A673 (cell line): ENCODE measurements at regions of chr5 and their contacts with region 1.

Region 1: DNA sequence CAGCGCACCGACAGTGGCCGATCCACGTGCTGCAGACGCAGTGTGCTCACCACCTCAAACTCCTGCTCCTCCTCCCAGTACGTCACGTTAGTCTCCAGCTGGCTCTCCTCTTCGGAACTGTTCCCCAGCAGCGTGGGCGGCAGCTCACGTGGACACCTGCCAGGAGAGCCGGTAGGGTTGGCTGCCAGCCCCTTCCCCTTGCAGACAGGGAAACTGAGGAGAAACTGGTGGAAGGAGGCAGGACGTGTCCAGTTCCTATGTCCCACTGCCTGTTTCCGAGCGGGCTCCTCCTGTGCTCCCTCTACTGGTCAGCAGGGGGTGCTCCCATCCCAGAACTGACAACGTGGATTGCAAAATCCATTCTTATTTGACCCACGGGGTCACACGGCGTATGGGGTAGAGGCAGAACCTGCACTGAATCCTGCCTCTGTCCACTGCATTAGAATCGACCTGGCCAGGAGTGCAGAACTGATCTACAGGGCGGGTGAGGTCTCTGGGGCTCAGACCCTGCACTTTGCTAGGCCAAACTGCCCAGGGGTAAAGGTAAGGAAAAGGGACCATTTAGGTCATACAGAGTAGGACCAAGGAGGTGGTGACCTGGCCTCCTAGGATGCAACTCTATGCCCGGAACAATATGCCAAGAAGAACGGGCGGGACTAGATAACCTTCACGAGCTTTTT is 25.7 kb downstream of the PDGFRB start:
- DNase-seq: peak; percentile 67
- H3K4me3 ChIP-seq: no peak overlapping the region
- H3K27ac ChIP-seq: no peak overlapping the region
- H3K4me1 ChIP-seq: no peaks in the 10 kb centered on the region
- H3K27me3 ChIP-seq: no peaks in the 10 kb centered on the region
- CTCF ChIP-seq: peak; percentile 94

Region 2: DNA sequence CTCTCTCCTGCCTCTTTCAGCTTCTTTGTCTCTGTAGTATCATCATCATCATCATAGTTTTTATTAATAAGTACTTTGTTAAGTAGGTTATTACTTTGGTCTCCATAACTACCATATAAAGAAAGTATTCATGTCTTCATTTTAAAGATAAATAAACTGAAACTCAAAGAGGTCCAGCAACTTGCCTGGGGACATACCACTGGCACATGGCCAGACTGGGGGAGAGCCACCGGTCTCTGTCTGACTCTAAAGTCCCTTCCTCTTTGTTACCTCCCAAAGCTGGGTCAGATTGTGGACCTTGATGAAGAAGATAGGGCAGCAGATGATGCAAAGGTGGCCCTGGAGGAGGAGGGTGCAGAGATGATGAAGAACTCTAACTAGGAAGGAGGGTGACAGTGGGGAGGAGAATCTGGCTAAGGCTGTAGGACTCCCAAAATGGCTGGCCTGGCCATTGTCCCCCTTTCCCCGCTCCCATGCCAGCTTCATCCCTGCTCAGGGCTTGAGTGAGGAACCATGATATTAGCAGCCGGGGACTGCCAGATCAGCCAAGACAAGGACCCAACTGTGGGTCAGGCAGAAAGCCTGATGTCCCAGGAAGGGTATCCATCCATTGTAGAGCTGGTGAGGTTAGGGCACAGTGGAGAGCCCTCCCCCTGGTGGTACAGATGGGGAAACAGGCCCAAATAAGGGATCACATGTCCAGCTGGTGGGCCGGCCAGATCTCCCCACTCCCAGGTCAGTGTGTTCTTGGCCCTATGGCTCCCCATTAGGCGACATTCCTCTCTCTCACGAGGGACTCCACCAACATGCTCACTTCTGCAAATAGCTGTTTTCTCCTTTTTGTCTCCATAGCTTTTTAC is 45.4 kb after region 1 on chr5:
- CTCF ChIA-PET with region 1: no interaction called
- POLR2A ChIA-PET with region 1: no interaction called
- intact Hi-C with region 1: loop called (anchors 1 kb)
- DNase-seq: peak; percentile 42
- H3K4me3 ChIP-seq: no peak overlapping the region
- H3K27ac ChIP-seq: no peak overlapping the region
- H3K4me1 ChIP-seq: no peaks in the 10 kb centered on the region
- H3K27me3 ChIP-seq: no peaks in the 10 kb centered on the region
- CTCF ChIP-seq: peak; percentile 66

Region 3: GRCh38 chr5:150347451-150347850 is 217.5 kb after region 1 on chr5:
- CTCF ChIA-PET with region 1: interaction called, 15 read pairs
- POLR2A ChIA-PET with region 1: no interaction called
- intact Hi-C with region 1: no loop called
- DNase-seq: no peak
- H3K4me3 ChIP-seq: no peak overlapping the region
- H3K27ac ChIP-seq: no peak overlapping the region
- H3K4me1 ChIP-seq: no peaks in the 10 kb centered on the region
- H3K27me3 ChIP-seq: no peaks in the 10 kb centered on the region
- CTCF ChIP-seq: no peak

Region 4: GRCh38 chr5:150458819-150459557 is 329.0 kb after region 1 on chr5:
- CTCF ChIA-PET with region 1: no interaction called
- POLR2A ChIA-PET with region 1: no interaction called
- intact Hi-C with region 1: no loop called
- DNase-seq: peak; percentile 86
- H3K4me3 ChIP-seq: peak overlapping the region; percentile 27
- H3K27ac ChIP-seq: no peak overlapping the region
- H3K4me1 ChIP-seq: no peaks in the 10 kb centered on the region
- H3K27me3 ChIP-seq: no peaks in the 10 kb centered on the region
- CTCF ChIP-seq: peak; percentile 74